Naive thymus-derived CD4-positive, alpha-beta T cell (primary cell): ENCODE measurements at regions of chr17 and their contacts with region 1.

Region 1: GRCh38 chr17:75109407-75110233 is at the start of gene ARMC7:
- DNase-seq: peak; percentile 79 to 96 (median 86)
- ATAC-seq: peak; percentile 90
- H3K4me3 ChIP-seq: peak within 1 kb of the TSS; percentile 81
- H3K4me3 Mint-ChIP-seq: peak within 1 kb of the TSS; percentile 72 to 94 (median 89)
- H3K27ac ChIP-seq: peak within 1 kb of the TSS; percentile 75
- H3K27ac Mint-ChIP-seq: peak within 1 kb of the TSS; percentile 68 to 93 (median 85)
- H3K4me1 ChIP-seq: peaks cover 19 to 20% of the 10 kb centered on the region in 2 donors
- H3K4me1 Mint-ChIP-seq: peaks cover 21 to 41% (median 34%) of the 10 kb centered on the region in 7 donors
- H3K27me3 ChIP-seq: no peaks in the 10 kb centered on the region
- H3K27me3 Mint-ChIP-seq: no peaks in the 10 kb centered on the region
- total RNA-seq, gene ARMC7: 5.8 to 18.9 (median 17.8) TPM

Region 2: GRCh38 chr17:74945543-74945942 is 164.1 kb before region 1 on chr17:
- CTCF ChIA-PET with region 1: no interaction called
- POLR2A ChIA-PET with region 1: no interaction called
- intact Hi-C with region 1: no loop called
- DNase-seq: no peak
- ATAC-seq: no peak
- H3K4me3 ChIP-seq: no peak overlapping the region
- H3K4me3 Mint-ChIP-seq: no peak overlapping the region
- H3K27ac ChIP-seq: no peak overlapping the region
- H3K27ac Mint-ChIP-seq: no peak overlapping the region
- H3K4me1 ChIP-seq: no peaks in the 10 kb centered on the region
- H3K4me1 Mint-ChIP-seq: no peaks in the 10 kb centered on the region
- H3K27me3 ChIP-seq: no peaks in the 10 kb centered on the region
- H3K27me3 Mint-ChIP-seq: peaks cover 4 to 20% (median 10%) of the 10 kb centered on the region in 5 donors

Region 3: DNA sequence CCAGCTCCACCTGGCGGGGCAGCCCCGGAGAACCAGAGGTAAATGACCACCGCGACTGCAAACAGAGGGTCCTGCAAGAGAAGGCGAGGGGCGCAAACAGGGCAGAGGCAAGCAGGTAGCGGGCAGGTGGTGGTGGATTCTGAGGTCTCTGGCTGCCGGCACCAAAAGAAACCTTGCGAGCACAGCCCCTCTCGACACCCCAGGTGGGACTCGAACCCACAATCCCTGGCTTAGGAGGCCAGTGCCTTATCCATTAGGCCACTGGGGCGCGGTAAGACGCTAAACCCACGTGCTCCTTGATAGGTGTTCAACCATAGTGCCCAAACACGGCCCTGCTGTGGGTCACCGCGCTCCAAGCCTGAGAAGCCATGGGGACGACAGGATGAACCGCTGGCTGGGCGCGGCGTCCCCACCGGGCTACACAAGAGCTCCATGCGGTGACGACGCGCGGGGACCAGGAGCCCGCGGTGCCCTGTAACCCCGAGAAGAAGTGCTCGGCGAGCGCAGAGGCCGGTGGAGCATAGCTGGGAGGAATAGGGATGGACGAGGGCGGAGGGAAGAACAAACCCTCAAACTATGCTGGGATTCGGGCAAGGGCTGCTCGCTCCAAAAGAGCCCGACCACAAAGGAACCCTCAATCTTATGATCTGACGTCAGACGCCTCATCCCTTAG is 75.2 kb before region 1 on chr17:
- CTCF ChIA-PET with region 1: no interaction called
- POLR2A ChIA-PET with region 1: interaction called, 4 read pairs
- intact Hi-C with region 1: loop called in 1 of 2 experiments (anchors 2 kb)
- DNase-seq: peak; percentile 63 to 95 (median 77)
- ATAC-seq: peak; percentile 37
- H3K4me3 ChIP-seq: peak overlapping the region; percentile 72
- H3K4me3 Mint-ChIP-seq: peak overlapping the region; percentile 85 to 97 (median 94)
- H3K27ac ChIP-seq: peak overlapping the region; percentile 77
- H3K27ac Mint-ChIP-seq: peak overlapping the region; percentile 95 to 100 (median 99)
- H3K4me1 ChIP-seq: peaks cover 36 to 40% of the 10 kb centered on the region in 2 donors
- H3K4me1 Mint-ChIP-seq: peaks cover 26 to 73% (median 58%) of the 10 kb centered on the region in 7 donors
- H3K27me3 ChIP-seq: no peaks in the 10 kb centered on the region
- H3K27me3 Mint-ChIP-seq: peaks cover 0 to 10% (median 0%) of the 10 kb centered on the region in 5 donors

Region 4: GRCh38 chr17:75069783-75070182 is 39.8 kb before region 1 on chr17:
- CTCF ChIA-PET with region 1: interaction called, 9 read pairs
- POLR2A ChIA-PET with region 1: interaction called, 7 read pairs
- intact Hi-C with region 1: loop called in 1 of 2 experiments (anchors 5 kb)
- DNase-seq: peak in 1 of 9 donors; percentile 40
- ATAC-seq: peak; percentile 47
- H3K4me3 ChIP-seq: no peak overlapping the region
- H3K4me3 Mint-ChIP-seq: peak overlapping the region in 1 of 10 donors; percentile 54
- H3K27ac ChIP-seq: no peak overlapping the region
- H3K27ac Mint-ChIP-seq: peak overlapping the region in 7 of 9 donors; percentile 14 to 75 (median 42)
- H3K4me1 ChIP-seq: peaks cover 7 to 9% of the 10 kb centered on the region in 2 donors
- H3K4me1 Mint-ChIP-seq: peaks cover 13 to 36% (median 28%) of the 10 kb centered on the region in 7 donors
- H3K27me3 ChIP-seq: no peaks in the 10 kb centered on the region
- H3K27me3 Mint-ChIP-seq: no peaks in the 10 kb centered on the region

Region 5: GRCh38 chr17:75131280-75132017 is 21.8 kb after region 1 on chr17 and contains the start of gene NT5C:
- CTCF ChIA-PET with region 1: interaction called, 47 read pairs
- POLR2A ChIA-PET with region 1: interaction called, 14 read pairs
- intact Hi-C with region 1: loop called (anchors 1 kb)
- DNase-seq: peak; percentile 32 to 82 (median 50)
- ATAC-seq: peak; percentile 85
- H3K4me3 ChIP-seq: peak within 1 kb of the TSS; percentile 71
- H3K4me3 Mint-ChIP-seq: peak within 1 kb of the TSS; percentile 79 to 93 (median 88)
- H3K27ac ChIP-seq: peak within 1 kb of the TSS; percentile 84
- H3K27ac Mint-ChIP-seq: peak within 1 kb of the TSS; percentile 76 to 93 (median 88)
- H3K4me1 ChIP-seq: peaks cover 5 to 7% of the 10 kb centered on the region in 2 donors
- H3K4me1 Mint-ChIP-seq: peaks cover 7 to 23% (median 10%) of the 10 kb centered on the region in 7 donors
- H3K27me3 ChIP-seq: no peaks in the 10 kb centered on the region
- H3K27me3 Mint-ChIP-seq: no peaks in the 10 kb centered on the region
- total RNA-seq, gene NT5C: 23.4 to 54.8 (median 37.5) TPM

Region 6: DNA sequence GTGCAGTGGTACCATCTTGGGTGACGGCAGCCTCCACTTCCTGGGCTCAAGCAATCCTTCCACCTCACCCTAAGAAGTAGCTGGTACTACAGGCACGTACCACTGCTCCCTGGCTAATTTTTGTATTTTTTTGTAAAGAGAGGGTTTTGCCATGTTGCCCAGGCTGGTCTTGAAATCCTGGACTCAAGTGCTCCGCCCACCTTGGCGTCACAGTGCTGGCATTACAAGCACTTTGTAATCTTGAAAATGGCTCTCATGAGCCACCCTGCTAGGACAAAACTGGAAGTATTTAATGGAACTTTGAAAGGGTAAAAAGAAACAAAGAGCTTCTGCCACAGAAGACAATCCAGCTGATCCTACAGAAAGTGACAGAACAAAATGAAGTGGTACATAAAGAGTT is 63.9 kb after region 1 on chr17:
- CTCF ChIA-PET with region 1: interaction called, 102 read pairs
- POLR2A ChIA-PET with region 1: interaction called, 10 read pairs
- intact Hi-C with region 1: loop called (anchors 1 kb)
- DNase-seq: no peak
- ATAC-seq: no peak
- H3K4me3 ChIP-seq: no peak overlapping the region
- H3K4me3 Mint-ChIP-seq: no peak overlapping the region
- H3K27ac ChIP-seq: no peak overlapping the region
- H3K27ac Mint-ChIP-seq: peak overlapping the region in 3 of 9 donors; percentile 16 to 51 (median 31)
- H3K4me1 ChIP-seq: peaks cover 0 to 3% of the 10 kb centered on the region in 2 donors
- H3K4me1 Mint-ChIP-seq: peaks cover 0 to 24% (median 23%) of the 10 kb centered on the region in 7 donors
- H3K27me3 ChIP-seq: no peaks in the 10 kb centered on the region
- H3K27me3 Mint-ChIP-seq: no peaks in the 10 kb centered on the region

Region 7: GRCh38 chr17:75238684-75239191 is 129.1 kb after region 1 on chr17:
- CTCF ChIA-PET with region 1: interaction called, 26 read pairs
- POLR2A ChIA-PET with region 1: interaction called, 3 read pairs
- intact Hi-C with region 1: loop called (anchors 1 kb)
- DNase-seq: peak; percentile 33 to 60 (median 55)
- ATAC-seq: peak; percentile 83
- H3K4me3 ChIP-seq: no peak overlapping the region
- H3K4me3 Mint-ChIP-seq: peak overlapping the region in 4 of 10 donors; percentile 38 to 51 (median 46)
- H3K27ac ChIP-seq: no peak overlapping the region
- H3K27ac Mint-ChIP-seq: peak overlapping the region; percentile 7 to 93 (median 85)
- H3K4me1 ChIP-seq: peaks cover 0 to 28% of the 10 kb centered on the region in 2 donors
- H3K4me1 Mint-ChIP-seq: peaks cover 5 to 25% (median 12%) of the 10 kb centered on the region in 7 donors
- H3K27me3 ChIP-seq: no peaks in the 10 kb centered on the region
- H3K27me3 Mint-ChIP-seq: no peaks in the 10 kb centered on the region

Region 8: GRCh38 chr17:75412455-75413317 is 303.1 kb after region 1 on chr17:
- CTCF ChIA-PET with region 1: interaction called, 7 read pairs
- POLR2A ChIA-PET with region 1: no interaction called
- intact Hi-C with region 1: loop called (anchors 1 to 5 kb)
- DNase-seq: peak; percentile 52 to 82 (median 73)
- ATAC-seq: peak; percentile 88
- H3K4me3 ChIP-seq: peak overlapping the region; percentile 25
- H3K4me3 Mint-ChIP-seq: peak overlapping the region; percentile 23 to 75 (median 60)
- H3K27ac ChIP-seq: peak overlapping the region; percentile 19
- H3K27ac Mint-ChIP-seq: peak overlapping the region in 6 of 9 donors; percentile 15 to 87 (median 45)
- H3K4me1 ChIP-seq: peaks cover 3 to 13% of the 10 kb centered on the region in 2 donors
- H3K4me1 Mint-ChIP-seq: peaks cover 14 to 26% (median 23%) of the 10 kb centered on the region in 7 donors
- H3K27me3 ChIP-seq: no peaks in the 10 kb centered on the region
- H3K27me3 Mint-ChIP-seq: peaks cover 0 to 27% (median 0%) of the 10 kb centered on the region in 5 donors